Left ventricle myocardium inferior (tissue), 1 donor: ENCODE measurements at regions of chr3 and their contacts with region 1.

Region 1: GRCh38 chr3:149120051-149120972 is 9.1 kb upstream of the HPS3 start:
- DNase-seq: no peak
- H3K4me3 ChIP-seq: no peak overlapping the region
- H3K27ac ChIP-seq: no peak overlapping the region
- H3K4me1 ChIP-seq: peaks cover 4% of the 10 kb centered on the region
- H3K27me3 ChIP-seq: no peaks in the 10 kb centered on the region
- CTCF ChIP-seq: peak; percentile 74

Region 2: GRCh38 chr3:149273096-149273751 is 152.9 kb after region 1 on chr3:
- intact Hi-C with region 1: loop called (anchors 2 kb)
- DNase-seq: no peak
- H3K4me3 ChIP-seq: no peak overlapping the region
- H3K27ac ChIP-seq: peak overlapping the region; percentile 57
- H3K4me1 ChIP-seq: peaks cover 19% of the 10 kb centered on the region
- H3K27me3 ChIP-seq: no peaks in the 10 kb centered on the region
- CTCF ChIP-seq: peak; percentile 97

Region 3: DNA sequence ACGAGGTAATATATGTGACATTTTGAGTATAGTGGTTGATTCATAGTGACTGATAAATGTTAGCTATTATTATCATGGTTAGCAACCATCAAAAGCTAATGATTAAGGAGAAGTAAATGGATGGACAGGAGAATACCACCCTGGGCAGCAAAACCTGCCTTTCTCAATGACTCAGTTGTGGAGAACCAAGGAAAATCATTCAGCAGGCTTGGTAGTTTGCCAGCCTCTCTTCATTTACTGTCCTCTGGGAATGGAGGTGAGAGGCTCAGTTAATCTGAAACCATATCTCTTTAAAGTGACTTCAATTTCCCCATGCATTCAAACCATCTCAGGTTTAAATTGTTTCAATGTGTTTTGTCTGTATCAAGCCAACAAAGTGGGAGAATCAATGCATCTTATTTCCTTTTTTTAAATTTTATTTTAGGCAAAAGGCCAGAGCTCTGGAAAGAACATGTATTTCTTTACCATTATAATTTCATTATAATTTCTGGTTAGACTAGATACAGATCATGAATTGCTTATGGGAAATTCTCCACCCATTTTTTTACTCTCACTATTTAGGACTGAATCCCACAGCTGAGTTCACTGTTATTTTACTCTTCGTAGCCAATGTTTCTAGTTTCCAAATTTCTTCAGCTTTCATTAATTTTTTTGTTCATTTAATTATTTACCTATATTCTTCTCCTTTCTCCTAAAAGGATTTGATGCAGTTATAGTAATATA is 210.5 kb after region 1 on chr3:
- intact Hi-C with region 1: no loop called
- DNase-seq: no peak
- H3K4me3 ChIP-seq: peak overlapping the region; percentile 61
- H3K27ac ChIP-seq: peak overlapping the region; percentile 85
- H3K4me1 ChIP-seq: peaks cover 17% of the 10 kb centered on the region
- H3K27me3 ChIP-seq: no peaks in the 10 kb centered on the region
- CTCF ChIP-seq: no peak